GM10248 (cell line): ENCODE measurements at regions of chr20 and their contacts with region 1.

Region 1: GRCh38 chr20:19661717-19662636 is 96.1 kb upstream of the RIN2 start:
- DNase-seq: peak; percentile 64
- CTCF ChIP-seq: peak; percentile 90

Region 2: GRCh38 chr20:19621072-19621471 is 40.9 kb before region 1 on chr20:
- CTCF ChIA-PET with region 1: interaction called, 58 read pairs
- POLR2A ChIA-PET with region 1: no interaction called
- DNase-seq: no peak
- CTCF ChIP-seq: no peak

Region 3: GRCh38 chr20:19628570-19629169 is 33.3 kb before region 1 on chr20:
- CTCF ChIA-PET with region 1: interaction called, 180 read pairs
- POLR2A ChIA-PET with region 1: no interaction called
- DNase-seq: peak; percentile 69
- CTCF ChIP-seq: peak; percentile 77

Region 4: DNA sequence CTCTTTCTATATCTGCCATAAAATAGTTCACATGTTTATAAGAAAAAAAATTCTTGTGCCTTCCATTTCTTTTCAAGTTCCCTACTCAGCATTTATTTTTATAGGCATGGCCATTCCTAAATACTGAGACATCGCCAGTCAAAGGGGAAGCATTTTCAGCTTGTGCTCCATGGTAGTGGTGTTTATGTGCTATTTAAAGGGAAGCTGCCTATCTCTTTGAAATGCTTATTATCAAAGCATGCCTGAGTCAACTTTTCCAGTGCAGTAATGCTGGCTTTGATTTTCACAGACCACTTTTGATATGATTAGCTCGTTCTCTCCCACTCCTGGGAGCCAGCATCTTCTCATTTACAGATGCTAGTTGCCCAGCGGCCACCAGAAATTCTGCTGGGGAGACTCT is 28.0 kb before region 1 on chr20:
- CTCF ChIA-PET with region 1: interaction called, 180 read pairs
- POLR2A ChIA-PET with region 1: no interaction called
- DNase-seq: no peak
- CTCF ChIP-seq: no peak

Region 5: GRCh38 chr20:19644085-19644484 is 17.9 kb before region 1 on chr20:
- CTCF ChIA-PET with region 1: interaction called, 19 read pairs
- POLR2A ChIA-PET with region 1: no interaction called
- DNase-seq: no peak
- CTCF ChIP-seq: no peak

Region 6: GRCh38 chr20:19673575-19673974 is 11.6 kb after region 1 on chr20:
- CTCF ChIA-PET with region 1: interaction called, 45 read pairs
- POLR2A ChIA-PET with region 1: no interaction called
- DNase-seq: no peak
- CTCF ChIP-seq: no peak